ENCODE measurements at regions of chr20 and their contacts with region 1.

Region 1: DNA sequence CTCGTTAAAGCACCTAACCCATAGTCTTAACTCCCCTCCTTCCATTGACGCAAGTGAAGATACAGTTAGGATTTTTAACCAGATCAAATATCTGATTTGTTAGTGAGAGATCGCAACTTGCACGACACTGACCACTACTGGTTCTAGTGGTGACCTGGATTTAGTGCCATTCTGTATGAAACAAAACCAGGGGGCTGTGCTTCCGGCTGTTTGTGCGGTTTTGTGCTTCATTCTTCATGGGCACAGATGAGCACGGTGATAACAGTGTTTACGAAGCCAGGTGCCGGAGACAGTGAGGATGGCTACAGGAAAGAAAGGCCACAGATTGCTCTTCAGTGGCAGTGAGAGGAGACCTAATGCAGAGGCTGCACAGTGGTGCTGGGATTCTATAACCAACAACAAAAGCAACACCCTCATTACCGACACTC is 75.5 kb downstream of the NOL4L start:
- DNase-seq: peak; percentile 82
- ATAC-seq: peak; percentile 82
- H3K4me3 Mint-ChIP-seq: peak overlapping the region; percentile 71
- H3K27ac Mint-ChIP-seq: peak overlapping the region; percentile 87
- H3K4me1 Mint-ChIP-seq: peaks cover 83% of the 10 kb centered on the region
- H3K27me3 Mint-ChIP-seq: no peaks in the 10 kb centered on the region

Region 2: DNA sequence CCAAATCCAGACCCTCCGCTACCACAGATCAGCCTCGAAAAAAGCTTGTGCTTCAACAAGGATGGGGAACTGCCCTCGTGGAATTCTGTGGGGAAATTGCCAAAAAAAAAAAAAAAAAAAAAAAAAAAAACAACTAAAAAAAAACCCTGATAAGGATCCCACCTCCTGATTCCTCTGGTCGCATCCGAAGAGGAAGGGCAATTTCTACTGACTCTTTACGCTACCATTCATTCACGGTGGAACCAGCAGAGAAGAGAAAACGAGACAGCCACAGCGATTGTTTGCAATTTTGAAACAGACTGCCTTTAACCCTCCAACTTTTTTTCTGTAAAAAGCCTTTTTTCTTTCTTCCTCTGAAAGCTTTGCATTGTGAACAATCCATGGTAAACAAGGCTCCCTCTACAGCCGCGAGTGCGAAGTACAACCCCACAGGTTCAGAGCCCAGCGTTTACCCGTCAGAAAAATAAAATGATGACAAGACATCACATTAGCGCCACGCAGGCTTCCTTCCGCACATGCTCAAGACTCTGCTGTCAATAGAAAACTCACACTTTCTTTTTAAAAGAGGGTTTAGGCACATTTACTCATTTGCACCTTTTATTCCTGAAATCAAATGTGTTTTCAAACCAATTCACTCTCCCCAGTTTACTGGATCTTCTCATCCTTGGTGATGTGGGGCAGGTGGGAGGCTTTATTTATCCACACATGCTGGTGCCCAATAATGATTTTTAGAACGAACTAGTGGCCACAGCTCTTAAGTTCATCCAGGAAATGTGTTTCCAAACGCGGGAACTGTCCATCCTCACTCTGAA is 24.5 kb before region 1 on chr20:
- CTCF ChIA-PET with region 1: interaction called, 14 read pairs
- POLR2A ChIA-PET with region 1: no interaction called
- DNase-seq: peak; percentile 90
- ATAC-seq: peak; percentile 82
- H3K4me3 Mint-ChIP-seq: peak overlapping the region; percentile 83
- H3K27ac Mint-ChIP-seq: peak overlapping the region; percentile 80
- H3K4me1 Mint-ChIP-seq: peaks cover 23% of the 10 kb centered on the region
- H3K27me3 Mint-ChIP-seq: no peaks in the 10 kb centered on the region

Region 3: DNA sequence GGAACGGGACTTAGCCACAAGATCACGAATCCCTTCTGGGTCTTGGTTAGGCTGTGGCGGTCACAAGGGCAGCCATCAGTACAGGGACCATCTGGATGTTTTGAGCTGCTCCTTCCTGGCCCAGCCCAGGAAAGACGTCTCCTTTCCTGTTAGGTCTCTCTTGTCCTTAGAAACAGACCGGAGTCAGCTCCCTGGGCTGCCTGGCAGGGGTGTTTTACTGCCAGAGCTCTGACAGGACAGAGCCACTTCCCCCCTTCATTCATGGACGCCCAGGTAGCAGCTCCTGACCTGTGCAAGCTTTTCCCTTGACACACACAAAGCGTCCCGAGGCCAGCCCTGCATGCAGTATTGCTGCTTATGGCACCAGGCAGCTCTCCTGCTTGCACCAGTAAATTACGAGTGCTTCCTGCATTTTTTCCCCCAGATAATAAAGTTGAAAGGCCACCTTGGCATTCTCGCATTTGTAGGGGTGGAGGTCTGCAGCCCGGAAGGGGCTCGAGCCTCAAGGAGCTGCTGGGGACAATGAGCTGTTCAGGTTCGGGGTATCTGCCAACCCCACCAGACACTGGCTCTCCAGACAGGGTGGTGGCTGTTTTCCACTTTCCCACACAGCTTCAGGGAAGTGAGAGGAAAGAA is 11.9 kb before region 1 on chr20:
- CTCF ChIA-PET with region 1: interaction called, 13 read pairs
- POLR2A ChIA-PET with region 1: no interaction called
- DNase-seq: no peak
- ATAC-seq: no peak
- H3K4me3 Mint-ChIP-seq: no peak overlapping the region
- H3K27ac Mint-ChIP-seq: no peak overlapping the region
- H3K4me1 Mint-ChIP-seq: peaks cover 4% of the 10 kb centered on the region
- H3K27me3 Mint-ChIP-seq: no peaks in the 10 kb centered on the region

Region 4: GRCh38 chr20:32521780-32522525 is 12.3 kb after region 1 on chr20:
- CTCF ChIA-PET with region 1: interaction called, 30 read pairs
- POLR2A ChIA-PET with region 1: interaction called, 4 read pairs
- DNase-seq: peak; percentile 71
- ATAC-seq: peak; percentile 79
- H3K4me3 Mint-ChIP-seq: no peak overlapping the region
- H3K27ac Mint-ChIP-seq: peak overlapping the region; percentile 80
- H3K4me1 Mint-ChIP-seq: peaks cover 56% of the 10 kb centered on the region
- H3K27me3 Mint-ChIP-seq: no peaks in the 10 kb centered on the region

Region 5: GRCh38 chr20:32535953-32536823 is 26.5 kb after region 1 on chr20:
- CTCF ChIA-PET with region 1: interaction called, 14 read pairs
- POLR2A ChIA-PET with region 1: interaction called, 10 read pairs
- DNase-seq: peak; percentile 92
- ATAC-seq: peak; percentile 52
- H3K4me3 Mint-ChIP-seq: peak overlapping the region; percentile 77
- H3K27ac Mint-ChIP-seq: peak overlapping the region; percentile 94
- H3K4me1 Mint-ChIP-seq: peaks cover 82% of the 10 kb centered on the region
- H3K27me3 Mint-ChIP-seq: no peaks in the 10 kb centered on the region

Measured in activated CD8-positive, alpha-beta T cell treated with anti-CD3 and anti-CD28 coated beads, Interleukin-2, amount 10 ng/mL, durations not matched to agents 7 days and 5 days (primary cell).